Tibial artery (tissue), 4 donors: ENCODE measurements at regions of chr11 and their contacts with region 1.

Region 1: GRCh38 chr11:113773416-113774173 is at the start of gene ZW10:
- DNase-seq: peak; percentile 97 to 98
- H3K4me3 ChIP-seq: peak within 1 kb of the TSS; percentile 60 to 91
- H3K27ac ChIP-seq: peak within 1 kb of the TSS; percentile 70 to 91
- H3K4me1 ChIP-seq: peaks cover 0 to 28% (median 11%) of the 10 kb centered on the region in 4 donors
- H3K27me3 ChIP-seq: no peaks in the 10 kb centered on the region
- CTCF ChIP-seq: peak; percentile 73 to 79

Region 2: GRCh38 chr11:113628912-113629311 is 144.7 kb before region 1 on chr11:
- intact Hi-C with region 1: no loop called
- DNase-seq: no peak
- H3K4me3 ChIP-seq: no peak overlapping the region
- H3K27ac ChIP-seq: no peak overlapping the region
- H3K4me1 ChIP-seq: peaks cover 0 to 27% (median 18%) of the 10 kb centered on the region in 4 donors
- H3K27me3 ChIP-seq: no peaks in the 10 kb centered on the region
- CTCF ChIP-seq: no peak

Region 3: DNA sequence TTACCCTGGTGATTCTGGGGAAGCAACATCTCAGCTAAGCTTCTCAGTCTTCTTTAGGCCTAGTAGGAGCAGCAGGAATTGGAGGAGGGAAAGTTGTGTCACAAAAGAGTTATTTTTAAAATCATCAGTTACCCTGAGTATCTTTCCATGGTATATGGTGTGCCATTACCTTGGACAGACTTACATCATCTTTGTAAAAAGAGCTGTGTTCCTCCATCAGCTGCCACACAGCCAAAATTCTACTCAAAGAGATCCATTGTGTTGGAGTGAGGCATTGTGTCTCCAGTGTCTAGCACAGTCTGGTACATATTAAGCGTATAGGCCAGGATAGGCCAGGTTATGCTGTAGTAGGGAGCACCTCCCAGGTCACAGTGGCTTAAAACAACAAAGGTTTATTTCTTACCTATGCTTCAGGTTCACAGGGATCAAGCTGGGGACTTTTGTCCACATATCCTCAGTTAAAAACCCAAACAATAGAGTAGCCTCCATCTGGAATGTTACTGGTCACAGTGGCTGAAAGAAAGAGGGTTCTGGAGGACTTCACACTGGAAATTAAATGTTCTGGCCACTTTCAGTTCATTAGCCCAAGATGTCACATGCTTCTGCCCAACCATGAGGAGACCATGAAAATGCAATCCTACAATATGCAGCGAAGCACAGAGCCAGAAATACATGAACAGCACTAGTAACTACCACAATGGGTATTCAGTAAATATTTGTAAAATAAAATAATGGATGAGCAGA is 57.5 kb before region 1 on chr11:
- intact Hi-C with region 1: no loop called
- DNase-seq: no peak
- H3K4me3 ChIP-seq: no peak overlapping the region
- H3K27ac ChIP-seq: no peak overlapping the region
- H3K4me1 ChIP-seq: no peaks in the 10 kb centered on the region
- H3K27me3 ChIP-seq: no peaks in the 10 kb centered on the region
- CTCF ChIP-seq: no peak

Region 4: GRCh38 chr11:113875234-113876073 is 101.9 kb after region 1 on chr11 and contains the start of gene USP28:
- intact Hi-C with region 1: loop called (anchors 10 kb)
- DNase-seq: peak; percentile 97 to 98
- H3K4me3 ChIP-seq: peak within 1 kb of the TSS; percentile 67 to 80
- H3K27ac ChIP-seq: peak within 1 kb of the TSS; percentile 89 to 92
- H3K4me1 ChIP-seq: peaks cover 0 to 39% (median 14%) of the 10 kb centered on the region in 4 donors
- H3K27me3 ChIP-seq: no peaks in the 10 kb centered on the region
- CTCF ChIP-seq: peak in 1 of 2 experiments; percentile 20